CD4-positive, alpha-beta T cell (primary cell): ENCODE measurements at regions of chr2 and their contacts with region 1.

Region 1: GRCh38 chr2:190408538-190409271 is 550 bp downstream of the MFSD6 start:
- DNase-seq: peak; percentile 61 to 91 (median 72)
- ATAC-seq: peak; percentile 49
- H3K4me3 ChIP-seq: peak overlapping the region; percentile 79
- H3K4me3 Mint-ChIP-seq: peak overlapping the region; percentile 94
- H3K27ac ChIP-seq: peak overlapping the region; percentile 95 to 99
- H3K27ac Mint-ChIP-seq: peak overlapping the region; percentile 97
- H3K4me1 ChIP-seq: peaks cover 40% of the 10 kb centered on the region
- H3K4me1 Mint-ChIP-seq: peaks cover 45% of the 10 kb centered on the region
- H3K27me3 ChIP-seq: no peaks in the 10 kb centered on the region
- H3K27me3 Mint-ChIP-seq: no peaks in the 10 kb centered on the region
- CTCF ChIP-seq: no peak

Region 2: GRCh38 chr2:189770590-189771322 is 637.9 kb before region 1 on chr2:
- CTCF ChIA-PET with region 1: no interaction called
- POLR2A ChIA-PET with region 1: no interaction called
- intact Hi-C with region 1: loop called in 1 of 2 experiments (anchors 10 kb)
- DNase-seq: no peak
- ATAC-seq: no peak
- H3K4me3 ChIP-seq: no peak overlapping the region
- H3K4me3 Mint-ChIP-seq: no peak overlapping the region
- H3K27ac ChIP-seq: no peak overlapping the region
- H3K27ac Mint-ChIP-seq: no peak overlapping the region
- H3K4me1 ChIP-seq: no peaks in the 10 kb centered on the region
- H3K4me1 Mint-ChIP-seq: peaks cover 5% of the 10 kb centered on the region
- H3K27me3 ChIP-seq: no peaks in the 10 kb centered on the region
- H3K27me3 Mint-ChIP-seq: no peaks in the 10 kb centered on the region
- CTCF ChIP-seq: no peak

Region 3: DNA sequence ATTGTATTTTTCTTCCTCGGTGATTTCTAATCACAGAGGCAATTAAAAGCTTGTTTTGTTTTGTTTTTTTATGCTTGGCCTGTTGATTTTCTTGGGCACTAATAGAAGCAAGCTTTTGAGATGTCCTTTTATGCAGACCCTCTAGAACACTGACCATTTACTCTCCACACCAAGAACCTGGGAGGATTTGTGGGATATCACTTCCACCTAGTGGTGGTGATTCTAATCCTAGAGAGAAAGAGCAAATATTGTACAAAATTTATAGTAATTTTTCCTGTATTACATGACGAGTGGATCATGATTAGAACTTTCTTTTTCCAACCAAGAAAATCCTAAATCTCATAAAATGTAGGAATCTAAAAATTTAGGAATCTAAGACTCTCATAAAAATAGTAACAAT is 102.4 kb after region 1 on chr2:
- CTCF ChIA-PET with region 1: no interaction called
- POLR2A ChIA-PET with region 1: interaction called, 23 read pairs
- intact Hi-C with region 1: loop called in 1 of 2 experiments (anchors 5 kb)
- DNase-seq: no peak
- ATAC-seq: no peak
- H3K4me3 ChIP-seq: no peak overlapping the region
- H3K4me3 Mint-ChIP-seq: no peak overlapping the region
- H3K27ac ChIP-seq: no peak overlapping the region
- H3K27ac Mint-ChIP-seq: no peak overlapping the region
- H3K4me1 ChIP-seq: peaks cover under 1% of the 10 kb centered on the region
- H3K4me1 Mint-ChIP-seq: peaks cover 21% of the 10 kb centered on the region
- H3K27me3 ChIP-seq: no peaks in the 10 kb centered on the region
- H3K27me3 Mint-ChIP-seq: no peaks in the 10 kb centered on the region
- CTCF ChIP-seq: no peak

Region 4: DNA sequence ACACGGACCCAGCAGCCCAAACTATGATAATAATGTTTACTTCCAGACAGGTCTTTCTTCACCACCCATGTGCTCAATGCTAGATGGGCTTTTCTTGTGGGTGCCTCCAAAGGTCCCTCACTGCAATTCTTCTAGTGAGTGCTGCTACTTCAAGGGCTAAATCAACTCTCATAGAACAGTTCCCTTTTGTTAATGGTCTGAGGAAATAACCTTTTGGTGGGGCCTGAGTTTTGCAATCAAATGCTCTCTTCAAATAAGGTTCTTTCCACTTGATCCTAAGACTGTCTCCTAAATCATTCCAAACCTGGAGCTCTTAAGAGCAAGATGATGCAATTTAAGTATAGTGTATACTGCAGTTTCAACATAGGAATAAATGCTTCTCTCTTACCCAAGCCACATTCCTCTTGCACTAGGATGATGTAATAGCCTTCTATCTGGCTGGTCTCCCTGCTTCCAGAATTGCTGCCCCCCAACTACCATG is 119.9 kb after region 1 on chr2:
- CTCF ChIA-PET with region 1: no interaction called
- POLR2A ChIA-PET with region 1: interaction called, 100 read pairs
- intact Hi-C with region 1: loop called in 1 of 2 experiments (anchors 5 kb)
- DNase-seq: no peak
- ATAC-seq: no peak
- H3K4me3 ChIP-seq: no peak overlapping the region
- H3K4me3 Mint-ChIP-seq: no peak overlapping the region
- H3K27ac ChIP-seq: no peak overlapping the region
- H3K27ac Mint-ChIP-seq: peak overlapping the region; percentile 7
- H3K4me1 ChIP-seq: peaks cover 49% of the 10 kb centered on the region
- H3K4me1 Mint-ChIP-seq: peaks cover 82% of the 10 kb centered on the region
- H3K27me3 ChIP-seq: no peaks in the 10 kb centered on the region
- H3K27me3 Mint-ChIP-seq: no peaks in the 10 kb centered on the region
- CTCF ChIP-seq: no peak